ENCODE measurements at regions of chr15 and their contacts with region 1.

Region 1: DNA sequence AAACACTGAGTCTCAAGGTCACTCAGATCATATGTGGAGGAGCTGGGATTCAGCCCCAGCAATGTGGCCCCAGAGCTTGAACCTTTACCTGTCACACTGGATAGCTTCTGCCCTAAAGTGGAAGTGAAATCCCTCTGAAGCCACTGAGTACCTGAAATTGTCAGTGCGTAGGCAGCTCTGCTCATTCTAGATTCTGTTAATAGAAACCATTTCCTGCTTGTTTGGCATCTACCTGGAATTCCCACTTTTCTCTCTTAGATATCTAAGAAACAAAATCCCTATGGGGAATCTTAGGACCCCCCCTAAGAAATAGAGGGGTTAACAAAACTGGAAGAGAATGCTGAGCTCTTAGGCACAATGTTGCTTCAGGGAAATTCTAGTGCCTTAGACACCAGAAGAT is 29.8 kb downstream of the FBXL22 start:
- DNase-seq: peak; percentile 60
- CTCF ChIP-seq: no peak

Region 2: GRCh38 chr15:63212050-63213004 is 414.6 kb before region 1 on chr15:
- CTCF ChIA-PET with region 1: no interaction called
- POLR2A ChIA-PET with region 1: no interaction called
- DNase-seq: peak; percentile 51
- CTCF ChIP-seq: no peak

Region 3: DNA sequence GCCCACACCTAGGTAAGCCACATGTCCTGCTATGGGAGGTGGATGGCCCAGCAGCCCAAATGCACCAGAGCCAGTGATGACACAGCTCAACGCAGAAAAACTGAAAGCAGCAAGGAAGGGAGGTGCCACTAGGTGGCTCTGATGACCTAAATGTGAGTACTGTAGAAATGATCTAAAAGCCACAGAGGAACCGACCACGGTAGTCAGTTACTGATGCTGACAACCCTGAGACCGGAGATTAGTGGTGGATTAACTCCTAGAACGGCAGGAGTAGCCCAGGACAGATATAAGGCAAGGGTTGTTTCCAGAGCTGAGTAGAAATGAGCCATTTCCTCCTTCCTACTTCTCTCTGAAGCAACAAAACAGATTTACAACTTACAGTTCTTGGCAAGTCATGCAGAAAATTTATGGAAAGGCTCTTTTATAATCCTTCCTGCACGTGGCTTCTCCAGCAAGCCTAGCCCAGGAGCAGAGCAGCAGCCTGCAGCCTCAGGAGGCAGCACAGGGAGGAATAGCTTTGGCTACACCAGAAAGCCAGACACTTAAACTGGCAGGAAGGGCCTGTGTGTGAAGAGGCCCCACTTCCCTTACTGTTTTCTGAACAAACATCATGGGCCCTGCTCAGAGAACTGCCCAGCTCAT is 16.6 kb before region 1 on chr15:
- CTCF ChIA-PET with region 1: interaction called, 58 read pairs
- POLR2A ChIA-PET with region 1: interaction called, 3 read pairs
- DNase-seq: peak; percentile 81
- CTCF ChIP-seq: peak; percentile 73

Region 4: DNA sequence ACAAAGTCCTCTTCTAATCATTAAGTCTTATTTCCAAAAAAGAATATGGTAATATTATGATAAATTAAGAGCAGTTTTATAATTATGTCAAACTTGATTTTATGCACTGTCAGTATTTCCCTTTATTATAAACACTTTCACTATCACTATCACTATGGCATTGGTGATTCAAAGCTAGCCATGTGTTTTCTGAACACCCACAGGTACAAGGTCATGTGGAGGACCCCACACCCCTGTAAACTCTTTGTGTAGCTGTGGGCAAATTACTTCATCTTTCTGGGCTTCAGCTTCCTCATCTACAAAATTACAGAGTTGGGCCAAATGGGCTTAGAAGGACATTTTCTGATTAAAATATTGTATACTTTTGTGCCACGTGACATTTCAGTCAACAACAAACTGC is 11.9 kb after region 1 on chr15:
- CTCF ChIA-PET with region 1: interaction called, 32 read pairs
- POLR2A ChIA-PET with region 1: no interaction called
- DNase-seq: no peak
- CTCF ChIP-seq: no peak

Region 5: GRCh38 chr15:63679588-63679987 is 52.6 kb after region 1 on chr15:
- CTCF ChIA-PET with region 1: no interaction called
- POLR2A ChIA-PET with region 1: no interaction called
- DNase-seq: no peak
- CTCF ChIP-seq: no peak

Measured in GM10248 (cell line).